MCF 10A (cell line): ENCODE measurements at regions of chr1 and their contacts with region 1.

Region 1: GRCh38 chr1:62746085-62746808 is 37.7 kb upstream of the ATG4C start:
- DNase-seq: peak; percentile 58
- H3K4me3 Mint-ChIP-seq: no peak overlapping the region
- H3K27ac Mint-ChIP-seq: no peak overlapping the region
- H3K4me1 Mint-ChIP-seq: no peaks in the 10 kb centered on the region
- H3K27me3 Mint-ChIP-seq: peaks cover 2% of the 10 kb centered on the region
- CTCF ChIP-seq: peak; percentile 51

Region 2: GRCh38 chr1:62131093-62131725 is 615.0 kb before region 1 on chr1:
- CTCF ChIA-PET with region 1: no interaction called
- POLR2A ChIA-PET with region 1: no interaction called
- intact Hi-C with region 1: loop called (anchors 2 kb)
- DNase-seq: peak; percentile 69
- H3K4me3 Mint-ChIP-seq: no peak overlapping the region
- H3K27ac Mint-ChIP-seq: no peak overlapping the region
- H3K4me1 Mint-ChIP-seq: no peaks in the 10 kb centered on the region
- H3K27me3 Mint-ChIP-seq: no peaks in the 10 kb centered on the region
- CTCF ChIP-seq: peak; percentile 73

Region 3: GRCh38 chr1:62407405-62408009 is 338.7 kb before region 1 on chr1:
- CTCF ChIA-PET with region 1: no interaction called
- POLR2A ChIA-PET with region 1: no interaction called
- intact Hi-C with region 1: loop called (anchors 2 kb)
- DNase-seq: peak; percentile 75
- H3K4me3 Mint-ChIP-seq: no peak overlapping the region
- H3K27ac Mint-ChIP-seq: no peak overlapping the region
- H3K4me1 Mint-ChIP-seq: peaks cover 6% of the 10 kb centered on the region
- H3K27me3 Mint-ChIP-seq: no peaks in the 10 kb centered on the region
- CTCF ChIP-seq: peak; percentile 62

Region 4: GRCh38 chr1:62508187-62508758 is 238.0 kb before region 1 on chr1:
- CTCF ChIA-PET with region 1: interaction called, 115 read pairs
- POLR2A ChIA-PET with region 1: interaction called, 21 read pairs
- intact Hi-C with region 1: loop called (anchors 1 kb)
- DNase-seq: peak; percentile 58
- H3K4me3 Mint-ChIP-seq: no peak overlapping the region
- H3K27ac Mint-ChIP-seq: no peak overlapping the region
- H3K4me1 Mint-ChIP-seq: no peaks in the 10 kb centered on the region
- H3K27me3 Mint-ChIP-seq: no peaks in the 10 kb centered on the region
- CTCF ChIP-seq: peak; percentile 46

Region 5: GRCh38 chr1:62539028-62539447 is 207.2 kb before region 1 on chr1:
- CTCF ChIA-PET with region 1: interaction called, 12 read pairs
- POLR2A ChIA-PET with region 1: no interaction called
- intact Hi-C with region 1: no loop called
- DNase-seq: no peak
- H3K4me3 Mint-ChIP-seq: no peak overlapping the region
- H3K27ac Mint-ChIP-seq: no peak overlapping the region
- H3K4me1 Mint-ChIP-seq: no peaks in the 10 kb centered on the region
- H3K27me3 Mint-ChIP-seq: no peaks in the 10 kb centered on the region
- CTCF ChIP-seq: no peak

Region 6: DNA sequence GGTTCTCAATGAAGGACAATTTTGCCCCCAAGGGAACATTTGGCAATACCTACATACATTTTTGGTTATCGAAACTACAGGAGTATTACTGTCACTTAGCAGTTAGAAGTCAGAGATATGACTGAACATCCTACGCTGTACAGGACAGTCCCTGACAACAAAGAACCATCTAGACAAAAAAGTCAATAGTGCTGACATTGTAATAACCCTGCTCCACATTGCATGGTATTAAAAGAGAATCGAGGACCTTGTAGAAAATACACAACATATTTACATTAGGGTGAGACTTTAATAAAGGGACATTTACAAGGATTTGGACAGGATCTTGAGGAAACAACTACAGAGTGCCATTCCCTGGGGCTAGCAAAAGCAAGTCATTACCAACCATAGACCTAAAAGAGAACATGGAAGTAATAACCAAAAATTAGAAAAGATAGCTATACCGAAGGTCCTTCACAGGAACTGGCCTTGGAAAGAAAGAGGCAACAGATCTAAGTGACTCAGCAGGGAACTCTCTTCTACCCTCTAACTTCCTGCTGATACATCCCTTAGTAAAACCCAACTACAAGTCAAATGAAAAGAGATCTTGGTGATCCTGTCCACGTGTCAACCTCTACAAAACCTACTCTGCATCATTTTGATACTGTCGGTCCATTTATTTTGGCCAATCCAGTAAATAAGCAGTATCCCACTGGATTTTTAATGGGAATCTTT is 108.7 kb before region 1 on chr1:
- CTCF ChIA-PET with region 1: no interaction called
- POLR2A ChIA-PET with region 1: no interaction called
- intact Hi-C with region 1: no loop called
- DNase-seq: no peak
- H3K4me3 Mint-ChIP-seq: no peak overlapping the region
- H3K27ac Mint-ChIP-seq: no peak overlapping the region
- H3K4me1 Mint-ChIP-seq: no peaks in the 10 kb centered on the region
- H3K27me3 Mint-ChIP-seq: no peaks in the 10 kb centered on the region
- CTCF ChIP-seq: no peak

Region 7: DNA sequence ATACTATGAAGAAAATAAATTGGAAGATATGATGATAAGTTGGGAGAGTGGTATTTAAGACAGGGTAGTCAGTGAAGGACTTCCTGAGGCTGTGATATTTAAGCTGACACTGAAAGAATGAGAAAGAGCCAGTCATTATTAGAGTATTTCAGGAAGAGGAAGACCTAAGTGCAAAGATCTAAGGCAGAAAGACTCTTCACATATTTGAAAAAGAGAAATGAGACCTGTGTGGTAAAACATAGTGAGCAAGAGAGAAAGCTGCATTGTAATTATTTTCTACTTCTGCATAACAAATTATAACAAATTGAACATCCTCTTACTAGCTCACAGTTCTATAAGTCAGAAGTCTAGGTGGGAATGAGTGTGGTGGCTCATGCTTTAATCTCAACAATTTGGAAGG is 23.5 kb before region 1 on chr1:
- CTCF ChIA-PET with region 1: interaction called, 15 read pairs
- POLR2A ChIA-PET with region 1: interaction called, 3 read pairs
- intact Hi-C with region 1: no loop called
- DNase-seq: no peak
- H3K4me3 Mint-ChIP-seq: no peak overlapping the region
- H3K27ac Mint-ChIP-seq: no peak overlapping the region
- H3K4me1 Mint-ChIP-seq: peaks cover 5% of the 10 kb centered on the region
- H3K27me3 Mint-ChIP-seq: no peaks in the 10 kb centered on the region
- CTCF ChIP-seq: no peak